Calu3 (cell line): ENCODE measurements at regions of chr18 and their contacts with region 1.

Region 1: DNA sequence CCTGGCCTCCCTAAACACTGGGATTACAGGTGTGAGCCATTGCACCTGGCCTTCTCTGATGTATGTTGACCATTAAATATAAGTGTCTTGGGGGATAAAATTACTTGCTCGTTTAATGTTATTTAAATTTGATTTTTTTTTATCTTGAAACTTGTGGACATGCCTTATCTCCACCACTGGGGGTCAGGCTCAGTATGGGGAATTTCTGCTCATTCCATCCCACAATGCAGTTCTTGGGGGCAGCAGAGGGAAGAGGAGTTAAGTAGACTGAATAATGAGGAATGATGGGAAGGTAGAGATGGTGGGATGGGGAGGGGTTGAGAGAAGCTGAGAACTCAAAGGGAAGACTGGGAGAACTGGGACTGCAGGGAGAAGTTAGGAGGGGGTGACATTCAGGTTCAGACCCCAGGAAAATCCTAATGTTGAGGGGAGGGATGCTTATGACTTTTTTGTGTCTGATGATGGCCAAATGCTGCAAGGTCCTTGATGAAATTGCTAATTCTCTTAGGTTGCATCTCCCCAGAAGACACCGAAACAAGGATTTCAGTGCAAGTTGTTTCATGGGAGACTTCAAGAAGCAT is 174.2 kb downstream of the MIB1 start:
- DNase-seq: peak; percentile 66
- H3K4me3 Mint-ChIP-seq: no peak overlapping the region
- H3K27ac Mint-ChIP-seq: no peak overlapping the region
- H3K4me1 Mint-ChIP-seq: no peaks in the 10 kb centered on the region
- H3K27me3 Mint-ChIP-seq: no peaks in the 10 kb centered on the region
- CTCF ChIP-seq: peak; percentile 81

Region 2: DNA sequence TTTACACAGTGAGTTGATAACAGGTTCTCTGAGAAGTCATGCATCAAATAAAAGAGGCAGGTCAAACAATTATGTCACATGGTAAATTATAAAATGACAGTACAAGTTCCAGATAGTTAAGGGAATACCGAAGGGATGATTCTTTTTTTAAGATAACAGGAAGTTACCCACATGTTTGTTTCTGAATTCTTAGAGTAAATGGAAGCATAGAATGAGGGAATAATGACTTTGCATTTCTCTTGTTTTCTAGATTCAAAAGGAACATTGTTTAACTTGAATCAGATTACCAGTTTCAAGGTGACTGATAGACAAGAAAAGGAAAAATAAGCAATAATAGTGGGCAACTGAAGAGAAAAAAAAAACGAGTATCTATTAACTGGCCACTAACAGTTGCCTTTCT is 49.8 kb before region 1 on chr18:
- CTCF ChIA-PET with region 1: no interaction called
- intact Hi-C with region 1: no loop called
- DNase-seq: no peak
- H3K4me3 Mint-ChIP-seq: no peak overlapping the region
- H3K27ac Mint-ChIP-seq: no peak overlapping the region
- H3K4me1 Mint-ChIP-seq: no peaks in the 10 kb centered on the region
- H3K27me3 Mint-ChIP-seq: no peaks in the 10 kb centered on the region
- CTCF ChIP-seq: no peak

Region 3: GRCh38 chr18:21955757-21956652 is 41.2 kb after region 1 on chr18:
- CTCF ChIA-PET with region 1: no interaction called
- intact Hi-C with region 1: loop called (anchors 5 kb)
- DNase-seq: peak; percentile 86
- H3K4me3 Mint-ChIP-seq: no peak overlapping the region
- H3K27ac Mint-ChIP-seq: no peak overlapping the region
- H3K4me1 Mint-ChIP-seq: no peaks in the 10 kb centered on the region
- H3K27me3 Mint-ChIP-seq: no peaks in the 10 kb centered on the region
- CTCF ChIP-seq: peak; percentile 90

Region 4: GRCh38 chr18:22282311-22283112 is 367.7 kb after region 1 on chr18:
- CTCF ChIA-PET with region 1: no interaction called
- intact Hi-C with region 1: loop called (anchors 5 kb)
- DNase-seq: peak; percentile 69
- H3K4me3 Mint-ChIP-seq: peak overlapping the region; percentile 41
- H3K27ac Mint-ChIP-seq: peak overlapping the region; percentile 98
- H3K4me1 Mint-ChIP-seq: peaks cover 70% of the 10 kb centered on the region
- H3K27me3 Mint-ChIP-seq: no peaks in the 10 kb centered on the region
- CTCF ChIP-seq: no peak

Region 5: DNA sequence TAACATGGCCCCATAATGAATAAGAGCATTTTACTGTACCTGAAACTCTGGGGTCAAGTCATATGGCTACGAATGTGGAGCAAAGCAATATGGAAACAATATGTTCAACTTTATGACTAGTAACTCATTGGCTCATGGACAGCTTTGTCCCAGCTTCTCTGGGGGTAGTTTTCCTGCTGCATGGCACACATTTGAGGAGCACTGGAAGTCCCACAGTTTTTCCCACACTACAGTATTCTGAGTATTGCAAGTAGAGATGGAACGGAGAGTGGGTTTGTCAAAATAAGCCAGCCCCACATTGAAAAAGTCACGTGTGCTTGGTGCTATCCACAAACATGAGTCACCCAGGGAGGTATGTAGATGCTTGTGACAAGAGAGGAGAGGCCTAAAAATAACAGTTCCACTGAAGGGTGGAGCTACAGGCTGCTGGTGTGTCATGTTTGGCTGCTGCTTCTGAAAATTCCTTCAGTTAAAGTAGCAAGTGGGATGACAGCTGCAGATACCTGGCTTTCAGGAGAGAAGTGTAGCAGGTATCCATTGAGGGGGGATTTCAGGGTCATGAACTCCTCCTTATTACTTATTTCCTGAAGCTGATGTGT is 551.1 kb after region 1 on chr18:
- CTCF ChIA-PET with region 1: no interaction called
- intact Hi-C with region 1: loop called (anchors 10 kb)
- DNase-seq: peak; percentile 70
- H3K4me3 Mint-ChIP-seq: peak overlapping the region; percentile 64
- H3K27ac Mint-ChIP-seq: peak overlapping the region; percentile 100
- H3K4me1 Mint-ChIP-seq: peaks cover 70% of the 10 kb centered on the region
- H3K27me3 Mint-ChIP-seq: no peaks in the 10 kb centered on the region
- CTCF ChIP-seq: no peak

Region 6: DNA sequence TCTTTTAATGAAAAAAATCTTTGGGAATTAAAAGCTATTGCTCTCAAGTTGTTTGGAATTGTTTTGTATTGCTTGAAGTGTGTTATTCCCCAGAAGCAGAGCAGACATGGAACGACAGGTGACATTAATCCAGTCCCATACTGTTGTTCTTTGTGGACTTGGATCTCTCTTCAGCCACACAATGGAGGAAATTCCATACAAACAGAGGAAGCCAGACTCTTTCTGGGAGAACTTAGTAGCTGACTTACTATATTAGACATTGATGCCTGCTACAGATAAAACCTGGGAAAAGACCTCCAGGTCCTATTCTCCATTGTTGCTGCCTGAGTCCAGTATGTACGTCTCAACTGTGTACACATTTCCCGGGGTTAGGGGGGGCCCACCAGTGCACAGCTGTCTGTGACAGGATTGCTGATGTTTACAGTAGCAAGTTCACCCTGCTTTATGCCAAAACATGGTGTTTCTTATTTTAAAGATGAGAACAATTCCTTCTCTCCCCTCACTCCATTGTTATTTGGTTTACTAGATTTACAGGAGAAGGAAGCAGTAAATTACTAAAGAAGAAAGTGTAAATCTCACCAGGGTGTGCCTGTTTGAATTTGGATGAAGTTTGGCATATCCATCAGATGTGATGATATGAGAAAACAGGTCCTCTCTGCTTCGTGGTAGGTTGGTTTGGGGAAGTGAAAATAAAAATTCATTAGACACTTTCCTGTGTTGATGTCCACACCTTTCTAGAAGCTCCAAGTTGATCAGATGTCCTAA is 875.9 kb after region 1 on chr18:
- CTCF ChIA-PET with region 1: no interaction called
- intact Hi-C with region 1: loop called (anchors 10 kb)
- DNase-seq: no peak
- H3K4me3 Mint-ChIP-seq: no peak overlapping the region
- H3K27ac Mint-ChIP-seq: no peak overlapping the region
- H3K4me1 Mint-ChIP-seq: peaks cover 12% of the 10 kb centered on the region
- H3K27me3 Mint-ChIP-seq: no peaks in the 10 kb centered on the region
- CTCF ChIP-seq: no peak